ENCODE measurements at regions of chr1 and their contacts with region 1.

Region 1: DNA sequence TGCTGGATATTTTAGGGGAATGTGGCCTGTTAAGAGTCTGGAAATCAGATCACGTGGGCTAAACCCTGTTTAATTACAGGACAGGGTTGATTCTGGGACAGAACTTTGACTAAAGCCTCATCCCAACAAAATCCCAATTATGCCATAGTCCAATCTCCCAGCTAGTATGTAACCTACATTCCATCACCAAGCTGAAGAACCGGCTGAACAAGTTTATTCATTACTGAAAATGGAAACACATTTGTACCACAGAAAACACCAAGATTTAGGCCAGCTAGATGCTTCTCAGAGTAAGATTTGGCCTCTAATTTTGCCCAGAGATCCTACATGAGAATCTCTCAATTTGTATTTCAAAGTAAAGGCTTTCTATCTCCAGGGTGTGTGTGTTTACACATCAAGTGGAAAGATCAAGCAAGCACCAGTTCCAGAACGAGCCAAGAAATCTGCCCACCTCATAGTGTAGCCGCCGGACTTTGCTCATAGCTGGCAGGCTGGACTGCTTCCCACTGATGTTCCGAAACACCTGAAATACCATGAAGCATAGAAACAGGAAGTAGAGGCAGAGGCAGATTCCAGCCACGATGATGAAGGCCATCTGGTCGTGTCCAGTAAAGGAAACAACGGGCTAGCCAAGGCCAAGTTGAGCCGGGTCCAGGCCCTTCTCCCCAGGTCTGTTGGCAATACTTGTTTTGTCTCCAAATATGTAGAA is 86.8 kb downstream of the WLS start:
- DNase-seq: no peak
- ATAC-seq: no peak
- H3K4me3 ChIP-seq: no peak overlapping the region
- H3K27ac ChIP-seq: no peak overlapping the region
- H3K4me1 ChIP-seq: peaks cover 44 to 51% of the 10 kb centered on the region in 2 donors
- H3K27me3 ChIP-seq: no peaks in the 10 kb centered on the region
- CTCF ChIP-seq: no peak
- POLR2A ChIP-seq: no peak

Region 2: DNA sequence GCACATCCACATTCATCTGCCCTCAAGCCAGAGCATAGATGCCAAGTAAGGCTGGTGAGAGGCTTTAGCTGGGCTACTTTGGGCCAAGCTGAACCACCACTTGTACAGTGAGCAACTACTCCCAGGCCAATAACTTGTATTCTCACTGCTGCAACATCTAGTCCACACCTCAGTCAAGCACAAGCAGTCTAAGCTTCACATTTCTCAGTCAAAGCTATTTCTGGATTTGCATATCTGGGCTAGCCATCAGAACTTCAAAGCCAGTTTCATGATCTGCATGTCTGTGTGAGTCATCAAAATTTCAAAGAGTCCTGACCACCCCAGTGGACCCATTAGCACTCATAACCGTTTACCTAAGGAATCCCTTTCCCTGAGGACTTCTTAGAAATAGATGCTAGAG is 17.4 kb before region 1 on chr1:
- in situ Hi-C with region 1: no loop called
- intact Hi-C with region 1: loop called (anchors 1 kb)
- DNase-seq: no peak
- ATAC-seq: peak; percentile 68 to 80
- H3K4me3 ChIP-seq: no peak overlapping the region
- H3K27ac ChIP-seq: peak overlapping the region; percentile 39 to 74 (median 56)
- H3K4me1 ChIP-seq: peaks cover 19 to 23% of the 10 kb centered on the region in 2 donors
- H3K27me3 ChIP-seq: no peaks in the 10 kb centered on the region
- CTCF ChIP-seq: no peak
- POLR2A ChIP-seq: no peak

Region 3: GRCh38 chr1:68197891-68198290 is 52.3 kb after region 1 on chr1:
- in situ Hi-C with region 1: no loop called
- intact Hi-C with region 1: loop called (anchors 2 kb)
- DNase-seq: peak in 1 of 2 donors; percentile 8
- ATAC-seq: peak; percentile 99
- H3K4me3 ChIP-seq: no peak overlapping the region
- H3K27ac ChIP-seq: peak overlapping the region; percentile 61 to 77 (median 70)
- H3K4me1 ChIP-seq: peaks cover 45 to 46% of the 10 kb centered on the region in 2 donors
- H3K27me3 ChIP-seq: no peaks in the 10 kb centered on the region
- CTCF ChIP-seq: no peak
- POLR2A ChIP-seq: no peak

Region 4: GRCh38 chr1:68221621-68222373 is 76.2 kb after region 1 on chr1:
- in situ Hi-C with region 1: no loop called
- intact Hi-C with region 1: no loop called
- DNase-seq: no peak
- ATAC-seq: no peak
- H3K4me3 ChIP-seq: no peak overlapping the region
- H3K27ac ChIP-seq: no peak overlapping the region
- H3K4me1 ChIP-seq: peaks cover 0 to 8% of the 10 kb centered on the region in 2 donors
- H3K27me3 ChIP-seq: no peaks in the 10 kb centered on the region
- CTCF ChIP-seq: no peak
- POLR2A ChIP-seq: no peak

Region 5: DNA sequence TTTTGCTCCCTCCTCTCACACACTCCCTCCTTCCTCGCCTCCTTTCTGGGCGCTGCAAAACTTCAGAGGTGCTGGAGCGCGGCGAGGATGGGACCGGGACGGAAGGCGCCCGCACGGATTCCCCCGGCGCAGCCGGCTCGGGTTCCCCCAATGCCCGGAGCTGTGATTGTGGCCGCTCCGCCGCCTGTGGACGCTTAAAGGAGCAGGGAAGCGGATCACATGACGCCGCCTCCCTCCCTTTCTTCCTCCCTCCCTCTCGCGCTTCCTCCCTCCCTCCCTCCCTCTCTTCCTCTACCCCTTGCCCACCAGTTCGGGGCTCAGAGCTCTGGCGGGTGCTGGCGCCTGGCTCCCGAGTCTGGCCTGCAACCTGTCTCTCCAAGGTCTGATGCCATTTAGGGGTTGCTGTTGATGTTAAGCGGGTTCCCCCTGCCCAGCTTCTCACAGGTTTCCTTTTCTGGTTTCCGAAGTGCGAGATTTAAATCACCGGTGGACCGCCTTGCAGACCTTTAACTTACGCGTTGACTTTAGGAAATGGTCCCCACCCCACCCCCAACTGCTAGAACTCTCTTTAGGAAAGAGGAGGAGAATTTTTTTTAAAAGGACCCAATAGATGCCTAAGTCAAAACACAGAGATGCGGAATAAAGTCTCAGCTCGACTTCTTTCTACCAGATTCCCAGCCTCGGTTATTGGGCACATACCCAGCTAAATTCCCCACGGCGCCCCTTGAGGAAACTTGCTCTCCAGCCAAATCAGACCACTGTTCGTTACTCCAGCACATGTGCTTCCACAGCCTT is 87.0 kb after region 1 on chr1 and contains the start of gene WLS:
- in situ Hi-C with region 1: no loop called
- intact Hi-C with region 1: loop called (anchors 5 kb)
- DNase-seq: peak; percentile 70 to 71
- ATAC-seq: peak; percentile 77 to 84
- H3K4me3 ChIP-seq: peak within 1 kb of the TSS; percentile 68 to 79 (median 75)
- H3K27ac ChIP-seq: peak within 1 kb of the TSS; percentile 78 to 83 (median 80)
- H3K4me1 ChIP-seq: peaks cover 0 to 22% of the 10 kb centered on the region in 2 donors
- H3K27me3 ChIP-seq: no peaks in the 10 kb centered on the region
- CTCF ChIP-seq: peak in 2 of 5 experiments; percentile 31 to 37
- POLR2A ChIP-seq: peak; percentile 79 to 88
- total RNA-seq, gene WLS: 8.6 to 15.7 (median 11.6) TPM